Heart right ventricle (tissue), 16 donors: ENCODE measurements at regions of chr1 and their contacts with region 1.

Region 1: DNA sequence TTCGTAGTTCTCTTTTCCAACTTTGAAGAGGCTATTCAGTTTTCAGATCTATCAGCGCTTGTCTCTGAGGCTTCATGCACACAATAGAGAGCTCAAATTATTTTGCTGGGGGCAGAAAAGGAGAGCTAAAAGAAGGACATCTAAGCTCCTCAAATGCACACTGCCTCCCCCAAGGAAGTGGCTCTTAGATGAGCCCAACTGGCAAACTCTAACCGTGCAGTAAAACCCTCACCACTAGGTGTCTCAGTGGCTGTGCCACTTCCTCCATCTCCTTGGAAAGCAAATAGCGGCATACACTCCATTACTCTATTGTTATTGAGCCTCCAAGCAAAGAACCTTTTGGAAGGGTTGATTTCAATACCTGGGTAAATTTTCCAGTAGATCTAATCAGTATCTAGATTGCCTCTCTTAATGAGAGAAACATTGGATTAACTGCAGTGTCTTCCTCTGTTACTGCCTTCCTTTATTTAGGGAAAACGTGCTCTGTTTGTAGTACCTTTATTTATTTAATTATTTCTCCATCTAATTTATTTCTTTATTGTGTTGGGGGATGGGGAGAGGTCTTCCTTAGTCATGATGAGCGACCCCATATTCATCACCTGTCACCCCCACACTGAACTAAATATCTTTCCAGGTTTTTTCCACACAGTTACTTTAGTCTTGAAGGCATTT is 9.2 kb upstream of the SFPQ start:
- DNase-seq: peak in 1 of 2 donors; percentile 71
- ATAC-seq: peak; percentile 74 to 98 (median 94)
- H3K4me3 ChIP-seq: no peak overlapping the region
- H3K27ac ChIP-seq: no peak overlapping the region
- H3K4me1 ChIP-seq: peaks cover 0 to 8% (median 0%) of the 10 kb centered on the region in 9 donors
- H3K27me3 ChIP-seq: no peaks in the 10 kb centered on the region
- CTCF ChIP-seq: peak; percentile 72 to 92 (median 83)

Region 2: DNA sequence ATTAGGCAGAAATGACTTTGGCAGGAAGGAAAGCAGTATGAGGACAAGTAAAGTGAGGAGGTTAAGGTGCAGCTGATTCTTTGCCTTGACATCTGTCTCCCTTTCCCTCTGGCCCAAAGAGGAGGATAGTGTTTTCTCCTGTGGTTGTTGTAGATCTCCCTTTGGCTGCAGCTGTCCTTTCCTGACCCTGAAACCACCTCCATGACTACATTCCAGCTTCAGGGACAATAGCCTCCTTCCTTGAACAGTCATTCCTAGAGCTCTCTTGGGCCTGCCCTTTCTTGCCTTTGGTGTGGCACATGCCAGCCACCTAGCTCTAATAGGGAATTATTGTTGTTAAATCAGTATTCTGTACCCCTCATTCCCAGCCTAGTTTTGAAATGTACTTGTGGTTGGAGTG is 116.8 kb before region 1 on chr1:
- intact Hi-C with region 1: no loop called
- DNase-seq: no peak
- ATAC-seq: no peak
- H3K4me3 ChIP-seq: no peak overlapping the region
- H3K27ac ChIP-seq: no peak overlapping the region
- H3K4me1 ChIP-seq: peaks cover 0 to 7% (median 4%) of the 10 kb centered on the region in 9 donors
- H3K27me3 ChIP-seq: no peaks in the 10 kb centered on the region
- CTCF ChIP-seq: no peak

Region 3: DNA sequence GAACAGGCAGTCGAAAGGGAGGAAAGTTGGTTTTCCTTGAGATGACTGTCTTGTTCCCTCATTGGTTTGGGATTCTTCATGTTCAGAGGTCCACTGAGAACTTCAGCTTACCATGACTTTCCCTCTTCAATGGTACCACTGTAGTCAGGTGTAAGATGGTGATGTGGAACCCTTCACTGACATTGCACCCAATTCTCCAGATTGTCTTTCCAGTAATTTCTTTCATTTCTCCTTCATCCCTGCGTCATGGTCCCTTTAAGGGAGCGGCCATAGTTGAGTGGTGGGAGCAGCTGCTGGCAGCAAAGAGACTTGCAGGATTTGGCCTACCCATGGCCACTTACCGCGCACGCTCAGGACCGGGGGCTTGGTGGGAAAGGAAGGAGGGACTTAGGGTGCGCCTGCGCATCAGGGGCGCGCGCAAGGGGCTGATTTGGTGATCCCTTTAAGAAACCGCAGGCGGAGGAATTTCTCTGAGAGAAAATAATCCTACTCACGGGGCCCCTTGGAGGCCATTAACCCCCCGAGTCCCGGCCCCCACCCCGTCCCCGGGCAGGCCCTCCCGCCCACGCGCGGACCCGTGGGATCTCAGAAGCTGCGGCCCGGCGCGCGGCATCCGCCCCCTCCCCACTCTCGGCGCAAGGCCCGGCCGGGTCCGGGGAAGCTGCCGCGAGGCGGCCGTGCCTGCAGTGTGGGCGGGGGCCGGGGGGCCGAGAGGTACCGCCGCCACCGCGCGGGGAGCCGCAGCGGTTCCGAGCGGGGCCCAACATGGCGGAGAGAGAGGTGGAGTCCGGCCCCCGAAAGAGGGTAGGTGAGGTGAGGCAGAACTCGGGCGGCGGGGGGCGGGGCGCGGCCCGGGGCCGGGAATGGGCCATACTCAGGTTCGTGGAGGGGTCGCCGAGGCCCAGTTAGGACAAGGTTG is 66.4 kb after region 1 on chr1 and contains the start of gene ZMYM4:
- intact Hi-C with region 1: loop called in 3 of 10 experiments (anchors 10 kb)
- DNase-seq: peak; percentile 93 to 96
- ATAC-seq: peak; percentile 98 to 99 (median 98)
- H3K4me3 ChIP-seq: peak within 1 kb of the TSS; percentile 70 to 97 (median 90)
- H3K27ac ChIP-seq: peak within 1 kb of the TSS; percentile 59 to 97 (median 88)
- H3K4me1 ChIP-seq: peaks cover 0 to 45% (median 19%) of the 10 kb centered on the region in 9 donors
- H3K27me3 ChIP-seq: no peaks in the 10 kb centered on the region
- CTCF ChIP-seq: peak in 2 of 9 donors; percentile 16 to 25
- total RNA-seq, gene ZMYM4: 26.1 to 37.7 (median 35.0) TPM

Region 4: GRCh38 chr1:35298464-35298863 is 96.3 kb after region 1 on chr1:
- intact Hi-C with region 1: loop called (anchors 1 to 10 kb)
- DNase-seq: peak in 1 of 2 donors; percentile 34
- ATAC-seq: peak; percentile 53 to 83 (median 74)
- H3K4me3 ChIP-seq: no peak overlapping the region
- H3K27ac ChIP-seq: peak overlapping the region in 1 of 10 donors; percentile 17
- H3K4me1 ChIP-seq: peaks cover 0 to 38% (median 16%) of the 10 kb centered on the region in 9 donors
- H3K27me3 ChIP-seq: no peaks in the 10 kb centered on the region
- CTCF ChIP-seq: peak in 7 of 9 donors; percentile 28 to 64 (median 53)

Region 5: DNA sequence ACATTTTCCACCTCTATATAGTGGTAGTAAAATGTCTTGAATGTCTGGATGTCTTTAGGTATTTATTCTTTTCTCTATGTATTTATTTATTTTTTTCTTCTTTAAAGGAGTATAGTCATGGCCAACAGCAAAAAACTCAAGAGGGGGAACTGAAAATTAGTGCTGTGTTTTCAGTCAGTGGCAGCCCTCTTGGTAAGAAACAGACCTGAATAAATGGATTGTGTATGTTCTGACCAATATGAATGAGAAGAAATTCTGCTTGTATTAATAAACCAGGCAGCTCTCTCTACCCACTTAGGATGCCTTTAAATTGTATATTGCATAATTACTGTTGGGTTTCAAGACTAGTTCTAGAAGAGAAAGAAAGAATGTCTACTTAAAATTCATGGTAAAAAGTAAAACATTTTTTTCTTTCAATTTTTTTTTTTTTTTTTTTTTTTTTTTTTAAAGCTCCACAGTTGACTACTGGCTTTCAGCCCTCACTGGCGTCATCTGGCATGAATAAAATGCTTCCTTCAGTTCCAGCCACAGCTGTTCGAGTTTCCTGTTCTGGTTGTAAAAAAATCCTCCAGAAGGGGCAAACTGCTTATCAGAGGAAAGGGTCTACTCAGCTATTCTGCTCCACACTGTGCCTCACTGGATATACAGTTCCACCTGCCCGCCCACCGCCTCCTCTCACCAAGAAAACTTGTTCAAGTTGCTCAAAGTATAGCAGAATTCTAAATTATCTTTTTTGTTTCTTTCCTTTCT is 167.9 kb after region 1 on chr1:
- intact Hi-C with region 1: loop called in 1 of 10 experiments (anchors 10 kb)
- DNase-seq: peak; percentile 27 to 84
- ATAC-seq: peak; percentile 73 to 93 (median 88)
- H3K4me3 ChIP-seq: no peak overlapping the region
- H3K27ac ChIP-seq: peak overlapping the region in 8 of 10 donors; percentile 1 to 62 (median 34)
- H3K4me1 ChIP-seq: peaks cover 0 to 15% (median 12%) of the 10 kb centered on the region in 9 donors
- H3K27me3 ChIP-seq: no peaks in the 10 kb centered on the region
- CTCF ChIP-seq: peak in 2 of 9 donors; percentile 4 to 8

Region 6: DNA sequence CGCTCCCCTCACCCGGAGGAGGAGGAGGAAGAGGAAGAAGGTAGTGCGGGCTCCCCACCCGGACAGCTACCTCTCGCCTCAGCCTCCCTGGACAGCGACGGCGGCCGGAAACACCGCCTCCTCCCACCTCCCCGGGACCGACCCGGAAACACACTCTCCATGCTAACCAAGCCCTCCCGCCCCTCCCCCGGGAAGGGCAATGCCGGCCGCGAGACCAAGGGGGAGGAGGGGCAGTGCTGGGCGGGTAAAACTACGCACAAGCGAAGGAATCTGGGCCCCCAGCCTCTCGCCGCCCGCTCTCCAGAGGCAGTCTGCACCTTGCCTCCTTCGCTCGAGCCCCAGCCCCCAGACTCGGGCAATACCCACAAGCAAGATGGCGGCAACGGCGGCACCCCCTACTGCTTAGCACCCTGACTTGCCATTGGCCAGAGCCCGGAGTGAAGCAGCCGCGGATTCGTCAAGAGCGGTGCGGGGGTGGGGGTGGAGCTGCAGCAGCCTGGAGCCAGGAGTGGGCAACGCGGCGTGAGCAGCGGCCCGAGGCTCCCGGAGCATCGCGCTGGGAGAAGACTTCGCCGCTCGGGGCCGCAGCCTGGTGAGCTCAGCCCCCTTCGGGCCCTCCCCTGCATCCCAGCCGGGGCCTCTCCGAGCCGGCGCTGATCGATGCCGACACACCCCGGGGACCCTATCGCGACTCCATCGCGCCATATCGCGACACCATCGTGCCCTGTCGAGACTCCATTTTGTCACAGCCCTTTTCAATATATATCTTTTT is 355.3 kb after region 1 on chr1 and contains the starts of genes KIAA0319L and NCDN:
- intact Hi-C with region 1: loop called in 3 of 10 experiments (anchors 5 to 10 kb)
- DNase-seq: peak; percentile 96 to 97
- ATAC-seq: peak; percentile 94 to 98 (median 97)
- H3K4me3 ChIP-seq: peak within 1 kb of the TSS; percentile 74 to 98 (median 89)
- H3K27ac ChIP-seq: peak within 1 kb of the TSS; percentile 97 to 100 (median 98)
- H3K4me1 ChIP-seq: peaks cover 0 to 84% (median 59%) of the 10 kb centered on the region in 9 donors
- H3K27me3 ChIP-seq: no peaks in the 10 kb centered on the region
- CTCF ChIP-seq: peak in 1 of 9 donors; percentile 6
- total RNA-seq, gene KIAA0319L: 57.9 to 84.3 (median 78.3) TPM
- total RNA-seq, gene NCDN: 20.3 to 51.7 (median 34.5) TPM

Region 7: DNA sequence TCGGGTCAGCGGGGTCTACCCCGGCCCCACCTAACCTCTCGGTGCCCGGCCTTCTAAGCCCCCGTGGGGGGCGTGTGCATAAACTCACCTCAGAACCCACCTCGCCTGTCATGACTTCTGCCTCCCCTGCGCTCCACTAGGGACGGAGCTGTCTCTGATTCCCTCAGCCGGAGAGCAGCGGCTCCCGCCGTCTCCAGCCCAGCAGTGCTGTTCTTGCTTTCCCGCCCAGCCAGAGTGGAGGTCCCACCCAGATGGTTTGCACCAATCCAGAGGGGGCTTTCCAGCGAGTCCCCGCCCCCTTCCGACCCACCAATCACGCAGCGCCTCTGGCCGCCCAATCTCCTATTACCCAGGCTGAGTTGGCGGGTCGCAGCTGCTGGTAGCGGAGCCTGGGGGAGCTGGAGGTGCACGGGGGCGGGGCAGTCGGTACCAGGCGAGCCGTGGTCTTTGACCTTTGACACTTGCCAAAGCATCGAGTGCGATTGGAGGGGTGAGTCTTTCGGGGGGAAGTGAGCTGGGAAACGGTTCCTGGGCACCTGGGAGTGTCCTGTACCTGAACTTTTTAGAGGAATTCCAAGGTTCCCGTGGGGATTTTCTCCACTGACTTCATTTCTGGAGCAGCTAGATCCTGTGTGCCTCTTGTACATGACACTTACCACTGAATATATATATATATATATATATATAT is 567.7 kb after region 1 on chr1 and contains the start of gene CLSPN:
- intact Hi-C with region 1: loop called in 1 of 10 experiments (anchors 10 kb)
- DNase-seq: peak; percentile 94 to 96
- ATAC-seq: peak; percentile 99 to 100 (median 99)
- H3K4me3 ChIP-seq: peak within 1 kb of the TSS; percentile 61 to 95 (median 76)
- H3K27ac ChIP-seq: peak within 1 kb of the TSS in 9 of 10 donors; percentile 67 to 86 (median 85)
- H3K4me1 ChIP-seq: peaks cover 0 to 14% (median 6%) of the 10 kb centered on the region in 9 donors
- H3K27me3 ChIP-seq: no peaks in the 10 kb centered on the region
- CTCF ChIP-seq: no peak
- total RNA-seq, gene CLSPN: 0.26 to 2.8 (median 0.43) TPM